HepG2 (cell line): ENCODE measurements at regions of chr2 and their contacts with region 1.

Region 1: GRCh38 chr2:88055371-88056128 is at the start of gene KRCC1:
- DNase-seq: peak; percentile 94
- ATAC-seq: peak; percentile 95
- H3K4me3 ChIP-seq: peak within 1 kb of the TSS; percentile 79 to 97 (median 96)
- H3K27ac ChIP-seq: peak within 1 kb of the TSS; percentile 93
- H3K4me1 ChIP-seq: peaks cover 71% of the 10 kb centered on the region
- H3K27me3 ChIP-seq: no peaks in the 10 kb centered on the region; a peak in 1 of 5 replicates
- CTCF ChIP-seq: no peak; the same call in 1 of the 2 replicates
- EP300 ChIP-seq: no peak
- POLR2A ChIP-seq: peak; percentile 89 to 91
- RAD21 ChIP-seq: peak; percentile 80
- total RNA-seq, gene KRCC1: 6.5 and 10.0 TPM in 2 replicates

Region 2: GRCh38 chr2:87995756-87996155 is 59.8 kb before region 1 on chr2:
- CTCF ChIA-PET with region 1: no interaction called
- POLR2A ChIA-PET with region 1: no interaction called
- in situ Hi-C with region 1: no loop called
- intact Hi-C with region 1: no loop called
- DNase-seq: no peak
- ATAC-seq: no peak
- H3K4me3 ChIP-seq: no peak overlapping the region
- H3K27ac ChIP-seq: no peak overlapping the region
- H3K4me1 ChIP-seq: no peaks in the 10 kb centered on the region
- H3K27me3 ChIP-seq: peaks cover 0 to 1% of the 10 kb centered on the region in 2 experiments; a peak in 1 of 5 replicates
- CTCF ChIP-seq: no peak
- EP300 ChIP-seq: no peak
- POLR2A ChIP-seq: no peak
- RAD21 ChIP-seq: no peak

Region 3: DNA sequence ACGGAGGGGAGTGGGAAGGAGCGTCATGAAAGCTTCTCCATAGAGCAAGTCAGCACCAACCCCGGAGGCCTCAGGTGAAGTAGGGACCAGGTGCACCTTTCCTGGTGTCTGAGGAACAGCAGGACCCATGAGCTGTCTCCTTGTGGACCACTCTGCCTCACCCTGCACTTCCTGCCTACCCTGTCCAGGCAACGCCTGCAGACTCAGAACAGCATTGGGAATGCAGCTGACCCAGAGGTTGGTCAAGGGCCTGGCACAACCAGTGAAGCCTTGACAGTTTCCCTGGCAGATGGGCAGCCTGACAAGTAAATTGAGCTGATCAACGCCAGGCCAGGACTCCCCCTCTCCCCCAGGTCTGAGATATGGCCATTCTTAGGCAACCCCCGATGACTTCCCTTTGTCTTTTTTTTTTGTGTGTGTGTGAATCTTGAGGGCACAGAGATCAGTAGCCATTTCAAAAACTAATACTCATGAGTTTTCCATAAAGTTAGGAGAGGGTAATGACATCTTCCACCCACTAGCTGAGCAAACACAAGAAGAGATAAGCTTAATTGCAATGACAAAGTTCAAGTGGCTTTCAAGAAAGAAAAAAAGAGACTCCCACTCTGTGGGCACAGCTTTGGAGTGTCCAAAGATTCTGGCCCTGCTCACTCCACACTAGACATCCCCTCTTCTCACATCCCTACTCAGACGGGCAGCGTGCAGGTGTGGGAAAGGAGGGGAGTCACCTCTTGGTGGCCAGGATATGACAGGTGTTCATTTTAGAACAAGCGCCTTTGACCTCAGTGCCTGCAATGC is 75.8 kb after region 1 on chr2:
- CTCF ChIA-PET with region 1: no interaction called
- POLR2A ChIA-PET with region 1: interaction called, 29 read pairs
- in situ Hi-C with region 1: no loop called
- intact Hi-C with region 1: loop called (anchors 2 kb)
- DNase-seq: peak; percentile 75
- ATAC-seq: peak; percentile 22
- H3K4me3 ChIP-seq: peak overlapping the region in 1 of 3 experiments; percentile 18; a peak in 1 of 6 replicates
- H3K27ac ChIP-seq: peak overlapping the region; percentile 75
- H3K4me1 ChIP-seq: peaks cover 89% of the 10 kb centered on the region
- H3K27me3 ChIP-seq: no peaks in the 10 kb centered on the region; a peak in 1 of 5 replicates
- CTCF ChIP-seq: no peak
- EP300 ChIP-seq: peak in 1 of 2 experiments; percentile 95; a peak in 2 of 4 replicates
- POLR2A ChIP-seq: no peak
- RAD21 ChIP-seq: no peak

Region 4: DNA sequence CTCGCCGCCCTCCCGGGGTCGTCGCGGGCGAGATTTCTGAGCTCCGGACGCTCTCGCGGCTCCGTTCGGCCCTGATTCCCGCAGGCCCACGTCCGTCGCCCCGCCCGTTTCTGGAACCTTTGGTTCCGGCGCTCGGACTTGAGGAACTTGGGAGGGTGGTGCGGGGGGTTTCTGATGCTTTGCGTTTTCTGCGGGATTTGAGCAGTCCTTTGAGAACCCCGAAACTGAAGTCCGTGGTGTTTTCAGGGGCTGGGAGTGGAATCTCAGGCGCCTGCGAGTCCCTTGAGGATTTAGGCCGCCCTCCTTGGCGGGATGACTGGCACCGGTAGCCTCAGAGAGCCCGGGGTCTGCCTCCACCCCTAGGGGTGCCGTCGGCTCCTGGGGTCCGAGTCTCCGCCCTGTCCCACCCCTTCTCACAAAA is 114.9 kb after region 1 on chr2:
- CTCF ChIA-PET with region 1: no interaction called
- POLR2A ChIA-PET with region 1: no interaction called
- in situ Hi-C with region 1: no loop called
- intact Hi-C with region 1: no loop called
- DNase-seq: no peak
- ATAC-seq: no peak
- H3K4me3 ChIP-seq: no peak overlapping the region
- H3K27ac ChIP-seq: no peak overlapping the region
- H3K4me1 ChIP-seq: no peaks in the 10 kb centered on the region
- H3K27me3 ChIP-seq: peaks cover 0 to 39% of the 10 kb centered on the region in 2 experiments; a peak in 3 of 5 replicates
- CTCF ChIP-seq: no peak
- EP300 ChIP-seq: no peak
- POLR2A ChIP-seq: no peak
- RAD21 ChIP-seq: no peak

Region 5: DNA sequence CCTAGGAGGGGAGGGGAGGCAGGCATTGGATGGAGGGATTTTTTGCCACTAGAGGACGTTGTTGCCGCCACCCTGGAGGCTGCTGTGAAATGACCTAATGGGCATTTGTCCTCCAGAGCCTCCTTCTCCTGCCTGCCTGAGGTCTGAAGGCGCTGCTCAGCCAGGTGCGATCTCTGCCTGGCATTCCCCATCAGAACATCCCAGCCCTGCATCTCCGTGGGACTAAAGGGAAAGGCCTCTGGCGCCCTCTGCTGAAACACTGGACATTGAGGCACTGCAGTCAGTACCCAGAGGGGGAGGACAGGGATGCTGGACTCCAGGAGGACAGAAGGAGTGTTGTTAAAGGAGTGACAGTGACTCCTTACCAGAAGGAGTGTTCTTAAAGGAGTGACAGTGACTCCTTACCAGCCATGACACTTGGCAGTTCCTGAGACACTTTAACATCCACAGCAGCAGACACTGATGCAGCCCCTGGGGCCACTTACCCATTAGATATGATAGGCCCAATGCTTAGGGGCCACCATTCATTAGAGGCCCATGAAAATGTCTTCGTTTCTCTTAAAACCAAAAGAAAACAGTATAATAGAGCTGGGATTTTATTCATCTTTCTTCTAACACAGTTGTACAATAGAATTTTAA is 131.6 kb after region 1 on chr2:
- CTCF ChIA-PET with region 1: interaction called, 15 read pairs
- POLR2A ChIA-PET with region 1: no interaction called
- in situ Hi-C with region 1: no loop called
- intact Hi-C with region 1: loop called (anchors 1 kb)
- DNase-seq: peak; percentile 70
- ATAC-seq: peak; percentile 89
- H3K4me3 ChIP-seq: no peak overlapping the region
- H3K27ac ChIP-seq: no peak overlapping the region
- H3K4me1 ChIP-seq: peaks cover 14% of the 10 kb centered on the region
- H3K27me3 ChIP-seq: peaks cover 0 to 8% of the 10 kb centered on the region in 2 experiments; a peak in 1 of 5 replicates
- CTCF ChIP-seq: peak; percentile 99
- EP300 ChIP-seq: no peak
- POLR2A ChIP-seq: no peak
- RAD21 ChIP-seq: peak; percentile 92

Region 6: GRCh38 chr2:88307817-88308216 is 252.3 kb after region 1 on chr2:
- CTCF ChIA-PET with region 1: no interaction called
- POLR2A ChIA-PET with region 1: no interaction called
- in situ Hi-C with region 1: no loop called
- intact Hi-C with region 1: loop called (anchors 5 kb)
- DNase-seq: peak; percentile 65
- ATAC-seq: peak; percentile 71
- H3K4me3 ChIP-seq: no peak overlapping the region
- H3K27ac ChIP-seq: no peak overlapping the region
- H3K4me1 ChIP-seq: no peaks in the 10 kb centered on the region
- H3K27me3 ChIP-seq: no peaks in the 10 kb centered on the region; a peak in 1 of 5 replicates
- CTCF ChIP-seq: peak; percentile 80
- EP300 ChIP-seq: no peak
- POLR2A ChIP-seq: no peak
- RAD21 ChIP-seq: peak; percentile 79